ENCODE measurements at regions of chr12 and their contacts with region 1.

Region 1: GRCh38 chr12:65084579-65084978 is 36.5 kb downstream of the WIF1 start:
- DNase-seq: no peak
- H3K4me3 ChIP-seq: no peak overlapping the region
- H3K27ac ChIP-seq: no peak overlapping the region
- H3K4me1 ChIP-seq: no peaks in the 10 kb centered on the region
- H3K27me3 ChIP-seq: peaks cover 13% of the 10 kb centered on the region
- CTCF ChIP-seq: no peak
- EP300 ChIP-seq: no peak
- POLR2A ChIP-seq: no peak

Region 2: GRCh38 chr12:66228462-66228861 is 1143.9 kb after region 1 on chr12:
- in situ Hi-C with region 1: no loop called
- intact Hi-C with region 1: loop called (anchors 5 kb)
- DNase-seq: no peak
- H3K4me3 ChIP-seq: no peak overlapping the region
- H3K27ac ChIP-seq: no peak overlapping the region
- H3K4me1 ChIP-seq: no peaks in the 10 kb centered on the region
- H3K27me3 ChIP-seq: no peaks in the 10 kb centered on the region
- CTCF ChIP-seq: no peak
- EP300 ChIP-seq: no peak
- POLR2A ChIP-seq: no peak

Region 3: GRCh38 chr12:66910366-66910974 is 1825.9 kb after region 1 on chr12:
- in situ Hi-C with region 1: no loop called
- intact Hi-C with region 1: no loop called
- DNase-seq: no peak
- H3K4me3 ChIP-seq: no peak overlapping the region
- H3K27ac ChIP-seq: no peak overlapping the region
- H3K4me1 ChIP-seq: peaks cover 0 to 4% (median 2%) of the 10 kb centered on the region in 4 donors
- H3K27me3 ChIP-seq: no peaks in the 10 kb centered on the region
- CTCF ChIP-seq: no peak
- EP300 ChIP-seq: no peak
- POLR2A ChIP-seq: no peak

Measured in transverse colon (tissue), 4 donors.